Posterior vena cava (tissue), 2 donors: ENCODE measurements at regions of chr9 and their contacts with region 1.

Region 1: GRCh38 chr9:92934321-92934720 is 13.0 kb upstream of the FGD3 start:
- DNase-seq: no peak

Region 2: DNA sequence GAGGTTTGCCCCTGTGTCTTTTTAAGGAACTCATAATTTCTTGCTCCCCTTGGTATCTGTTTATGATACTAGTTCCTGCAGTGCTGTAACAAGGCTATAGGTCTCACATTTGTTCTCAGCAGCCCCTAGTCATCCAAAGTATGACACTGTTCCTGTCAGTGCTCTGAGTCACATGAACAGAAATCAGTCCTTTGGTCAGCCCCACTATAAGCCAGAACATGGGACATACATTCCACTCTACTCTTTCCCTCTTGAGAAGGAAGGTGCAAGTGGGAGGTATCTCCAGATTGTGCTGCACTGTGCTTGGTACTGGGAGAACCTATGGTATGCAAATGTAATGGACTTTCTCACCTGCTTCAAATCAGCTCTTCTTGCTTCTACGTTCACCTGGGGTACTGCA is 727.8 kb before region 1 on chr9:
- intact Hi-C with region 1: loop called in 1 of 2 experiments (anchors 10 kb)
- DNase-seq: no peak

Region 3: DNA sequence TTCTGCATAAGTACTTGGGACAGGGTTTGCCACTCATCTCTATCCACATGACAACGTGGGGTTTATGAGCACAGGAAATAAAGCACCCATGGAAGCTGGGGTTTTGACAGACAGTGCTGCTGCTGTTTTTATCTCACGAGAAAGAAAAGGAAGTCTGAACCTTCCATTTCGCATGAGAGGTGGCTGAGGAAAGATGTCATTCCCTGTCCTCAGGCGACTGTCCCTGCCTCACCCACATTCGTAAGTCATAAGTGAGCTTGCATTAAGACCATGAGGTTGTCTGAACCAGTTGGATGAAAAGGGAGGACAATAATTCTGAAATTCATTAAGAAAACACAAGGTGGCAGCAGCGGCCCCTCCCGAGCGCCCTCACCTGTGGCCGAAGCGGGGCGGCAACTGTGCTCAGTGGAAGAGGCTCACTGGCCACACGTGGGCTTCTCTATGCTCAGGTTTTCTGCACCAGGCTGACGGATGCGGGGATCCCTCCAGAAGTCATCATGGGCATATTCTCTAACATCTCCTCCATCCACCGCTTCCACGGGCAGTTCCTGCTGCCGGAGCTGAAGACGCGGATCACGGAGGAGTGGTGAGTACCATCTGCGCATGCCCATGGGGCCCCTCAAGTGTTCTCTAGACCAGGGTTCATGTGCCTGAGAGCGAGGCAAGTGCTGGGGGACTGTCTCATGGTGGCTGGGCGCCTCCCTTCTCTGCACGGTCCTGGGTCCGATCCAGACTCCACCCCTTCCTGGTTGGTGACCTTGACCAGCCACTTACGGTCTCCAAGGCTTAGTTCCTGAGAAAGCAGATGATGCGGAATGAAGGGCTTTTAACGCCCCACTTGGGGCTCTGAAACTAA is 69.5 kb after region 1 on chr9:
- intact Hi-C with region 1: loop called in 1 of 2 experiments (anchors 2 kb)
- DNase-seq: no peak